Panc1 (cell line): ENCODE measurements at regions of chr7 and their contacts with region 1.

Region 1: DNA sequence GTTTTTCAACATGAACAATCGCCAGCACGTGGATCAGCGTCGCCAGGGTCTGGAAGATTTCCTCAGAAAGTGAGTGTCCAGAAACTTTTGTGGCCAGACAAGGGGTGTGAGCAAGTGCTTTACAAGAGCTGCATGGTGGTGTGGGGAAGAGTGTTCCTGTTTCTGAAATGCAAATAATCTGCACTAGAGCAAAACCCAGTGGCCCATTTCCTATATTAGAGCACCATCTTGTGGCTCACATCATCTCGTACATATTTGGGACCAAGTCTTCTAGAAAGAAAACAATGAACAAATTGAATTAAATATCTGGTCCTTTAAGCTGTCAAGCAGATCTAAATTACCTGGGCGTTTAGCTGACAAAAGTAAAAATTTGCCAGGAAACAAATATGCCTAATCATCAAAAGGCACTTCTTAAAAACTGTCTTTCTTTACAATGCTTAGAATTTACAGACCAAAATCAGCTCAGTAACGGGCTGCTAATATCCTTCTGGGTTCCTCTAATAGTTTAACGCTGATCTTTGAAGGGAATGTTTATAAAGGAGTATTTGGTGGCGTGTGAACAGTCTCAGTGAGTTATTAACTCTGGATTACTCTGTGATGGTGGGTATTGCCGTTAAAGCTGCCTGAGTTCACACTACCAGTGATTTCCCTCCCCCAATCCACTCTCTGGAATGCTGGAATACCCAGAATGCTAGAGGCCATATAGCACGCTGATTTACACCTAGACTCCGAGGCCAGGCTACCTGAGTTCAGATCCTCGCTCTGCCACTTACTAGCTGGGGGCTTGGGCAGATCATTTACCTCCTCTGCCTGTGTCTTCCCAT is 73.6 kb downstream of the SNX10 start:
- DNase-seq: peak; percentile 69
- ATAC-seq: peak; percentile 84
- H3K4me3 ChIP-seq: no peak overlapping the region
- H3K27ac ChIP-seq: no peak overlapping the region
- H3K4me1 ChIP-seq: no peaks in the 10 kb centered on the region
- H3K27me3 ChIP-seq: no peaks in the 10 kb centered on the region
- CTCF ChIP-seq: peak; percentile 81

Region 2: GRCh38 chr7:25894902-25895791 is 470.1 kb before region 1 on chr7:
- CTCF ChIA-PET with region 1: interaction called, 8 read pairs
- POLR2A ChIA-PET with region 1: no interaction called
- in situ Hi-C with region 1: no loop called
- intact Hi-C with region 1: loop called (anchors 1 kb)
- DNase-seq: peak; percentile 20
- ATAC-seq: peak; percentile 80
- H3K4me3 ChIP-seq: peak overlapping the region; percentile 6 to 44
- H3K27ac ChIP-seq: no peak overlapping the region
- H3K4me1 ChIP-seq: peaks cover 4% of the 10 kb centered on the region; the same call in 1 of the 2 replicates
- H3K27me3 ChIP-seq: peaks cover 5% of the 10 kb centered on the region; the same call in 1 of the 2 replicates
- CTCF ChIP-seq: peak; percentile 92

Region 3: GRCh38 chr7:26187380-26188205 is 177.7 kb before region 1 on chr7:
- CTCF ChIA-PET with region 1: interaction called, 3 read pairs
- POLR2A ChIA-PET with region 1: no interaction called
- in situ Hi-C with region 1: no loop called
- intact Hi-C with region 1: loop called (anchors 10 kb)
- DNase-seq: no peak
- ATAC-seq: peak; percentile 28
- H3K4me3 ChIP-seq: no peak overlapping the region
- H3K27ac ChIP-seq: peak overlapping the region; percentile 87
- H3K4me1 ChIP-seq: peaks cover 92% of the 10 kb centered on the region
- H3K27me3 ChIP-seq: no peaks in the 10 kb centered on the region
- CTCF ChIP-seq: no peak

Region 4: DNA sequence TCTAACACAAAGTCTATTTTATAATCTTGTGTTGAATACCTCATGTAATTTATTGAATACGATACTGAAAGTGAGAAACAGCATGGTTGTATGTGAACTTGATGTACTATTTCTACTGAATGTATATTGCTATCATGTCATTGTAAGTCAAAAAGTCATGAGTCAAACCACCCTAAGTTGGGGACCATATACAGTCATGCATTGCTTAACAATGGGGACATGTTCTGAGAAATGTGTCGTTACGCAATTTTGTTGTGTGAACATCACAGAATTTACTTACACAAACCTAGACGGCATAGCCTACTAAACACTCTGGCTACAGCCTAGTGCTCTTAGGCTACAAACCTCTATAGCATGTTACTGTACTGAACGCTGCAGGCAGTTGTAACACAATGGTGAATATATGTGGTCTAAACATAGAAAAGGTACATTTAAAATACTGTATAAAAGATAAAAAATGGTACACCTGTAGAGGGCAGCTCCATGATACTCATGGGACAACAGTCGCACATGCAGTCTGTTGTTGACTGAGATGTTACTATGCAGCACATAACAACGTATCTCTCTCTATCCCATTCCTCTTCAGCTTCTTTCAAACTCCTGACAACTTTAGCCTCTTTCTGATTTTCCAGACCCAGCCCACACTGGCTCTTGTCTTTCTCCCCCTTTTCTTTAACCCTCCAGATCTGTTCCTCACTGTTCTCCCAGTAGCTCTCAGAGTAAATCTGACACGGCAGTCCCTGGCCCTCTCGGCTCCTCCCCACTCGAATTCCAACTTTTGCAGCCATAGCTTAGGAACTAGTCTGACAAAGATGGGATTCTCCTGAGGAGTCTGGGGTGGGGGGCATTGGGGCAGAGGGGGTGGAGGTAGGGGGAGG is 16.4 kb after region 1 on chr7:
- CTCF ChIA-PET with region 1: interaction called, 10 read pairs
- POLR2A ChIA-PET with region 1: interaction called, 4 read pairs
- in situ Hi-C with region 1: no loop called
- intact Hi-C with region 1: no loop called
- DNase-seq: no peak
- ATAC-seq: no peak
- H3K4me3 ChIP-seq: no peak overlapping the region
- H3K27ac ChIP-seq: no peak overlapping the region
- H3K4me1 ChIP-seq: no peaks in the 10 kb centered on the region; the same call in 1 of the 2 replicates
- H3K27me3 ChIP-seq: peaks cover 37% of the 10 kb centered on the region
- CTCF ChIP-seq: no peak

Region 5: GRCh38 chr7:27160546-27161213 is 795.4 kb after region 1 on chr7:
- CTCF ChIA-PET with region 1: interaction called, 11 read pairs
- POLR2A ChIA-PET with region 1: no interaction called
- in situ Hi-C with region 1: no loop called
- intact Hi-C with region 1: no loop called
- DNase-seq: no peak
- ATAC-seq: peak; percentile 87
- H3K4me3 ChIP-seq: peak overlapping the region; percentile 71 to 80
- H3K27ac ChIP-seq: peak overlapping the region; percentile 81
- H3K4me1 ChIP-seq: no peaks in the 10 kb centered on the region
- H3K27me3 ChIP-seq: no peaks in the 10 kb centered on the region
- CTCF ChIP-seq: peak; percentile 100